ENCODE measurements at regions of chr3 and their contacts with region 1.

Region 1: GRCh38 chr3:66407611-66408218 is 93.1 kb downstream of the LRIG1 start:
- DNase-seq: peak; percentile 70 to 75
- H3K4me3 ChIP-seq: no peak overlapping the region
- H3K27ac ChIP-seq: no peak overlapping the region
- H3K4me1 ChIP-seq: no peaks in the 10 kb centered on the region
- H3K27me3 ChIP-seq: no peaks in the 10 kb centered on the region
- CTCF ChIP-seq: peak; percentile 78 to 93 (median 84)
- POLR2A ChIP-seq: no peak

Region 2: GRCh38 chr3:65702202-65702601 is 705.5 kb before region 1 on chr3:
- intact Hi-C with region 1: no loop called
- DNase-seq: no peak
- H3K4me3 ChIP-seq: no peak overlapping the region
- H3K27ac ChIP-seq: no peak overlapping the region
- H3K4me1 ChIP-seq: peaks cover 8 to 13% of the 10 kb centered on the region in 2 donors
- H3K27me3 ChIP-seq: no peaks in the 10 kb centered on the region
- CTCF ChIP-seq: no peak
- POLR2A ChIP-seq: no peak

Region 3: DNA sequence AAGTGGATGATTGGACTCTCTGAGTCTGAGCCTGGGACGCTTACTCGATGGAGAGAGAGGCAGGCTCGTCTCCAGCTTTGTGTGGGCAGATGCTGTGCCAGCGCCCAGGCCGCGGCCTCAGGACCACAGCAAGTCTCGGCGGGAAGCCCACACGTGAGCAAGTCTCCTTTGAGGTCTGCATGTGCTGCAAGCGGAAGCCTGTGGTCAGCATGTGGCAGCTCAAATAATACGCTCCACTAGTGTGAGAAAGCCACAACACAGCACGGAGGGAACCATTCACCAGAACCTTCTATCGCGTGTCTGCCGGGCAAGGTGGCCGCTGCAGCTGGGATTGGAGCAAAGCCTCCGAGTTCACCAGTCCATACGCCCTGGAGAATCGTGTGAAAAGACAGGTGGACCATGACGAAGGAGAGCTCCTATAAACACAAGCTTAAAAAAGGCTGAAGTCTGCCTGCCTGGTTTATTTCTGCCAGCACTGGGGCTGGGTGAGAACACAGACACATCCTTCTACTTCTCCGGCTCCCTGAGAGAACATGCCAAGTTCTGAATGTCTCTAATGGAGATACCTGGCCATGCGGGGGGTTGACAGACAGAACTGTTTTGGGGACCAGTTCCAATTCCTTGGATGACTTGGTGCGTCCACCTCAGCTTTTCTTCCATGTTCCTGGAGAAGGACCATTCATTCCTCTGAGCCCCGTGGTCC is 175.2 kb after region 1 on chr3:
- intact Hi-C with region 1: loop called (anchors 10 kb)
- DNase-seq: peak; percentile 71 to 78
- H3K4me3 ChIP-seq: no peak overlapping the region
- H3K27ac ChIP-seq: no peak overlapping the region
- H3K4me1 ChIP-seq: peaks cover 0 to 11% of the 10 kb centered on the region in 2 donors
- H3K27me3 ChIP-seq: no peaks in the 10 kb centered on the region
- CTCF ChIP-seq: no peak
- POLR2A ChIP-seq: no peak